ENCODE measurements at regions of chr6 and their contacts with region 1.

Region 1: GRCh38 chr6:30616811-30617564 is at the start of gene PPP1R10:
- DNase-seq: peak; percentile 100
- ATAC-seq: peak; percentile 78
- H3K4me3 Mint-ChIP-seq: peak within 1 kb of the TSS; percentile 93
- H3K27ac Mint-ChIP-seq: peak within 1 kb of the TSS; percentile 98
- H3K4me1 Mint-ChIP-seq: peaks cover 38% of the 10 kb centered on the region
- H3K27me3 Mint-ChIP-seq: peaks cover 2% of the 10 kb centered on the region
- total RNA-seq, gene PPP1R10: 92.8 to 99.7 TPM

Region 2: DNA sequence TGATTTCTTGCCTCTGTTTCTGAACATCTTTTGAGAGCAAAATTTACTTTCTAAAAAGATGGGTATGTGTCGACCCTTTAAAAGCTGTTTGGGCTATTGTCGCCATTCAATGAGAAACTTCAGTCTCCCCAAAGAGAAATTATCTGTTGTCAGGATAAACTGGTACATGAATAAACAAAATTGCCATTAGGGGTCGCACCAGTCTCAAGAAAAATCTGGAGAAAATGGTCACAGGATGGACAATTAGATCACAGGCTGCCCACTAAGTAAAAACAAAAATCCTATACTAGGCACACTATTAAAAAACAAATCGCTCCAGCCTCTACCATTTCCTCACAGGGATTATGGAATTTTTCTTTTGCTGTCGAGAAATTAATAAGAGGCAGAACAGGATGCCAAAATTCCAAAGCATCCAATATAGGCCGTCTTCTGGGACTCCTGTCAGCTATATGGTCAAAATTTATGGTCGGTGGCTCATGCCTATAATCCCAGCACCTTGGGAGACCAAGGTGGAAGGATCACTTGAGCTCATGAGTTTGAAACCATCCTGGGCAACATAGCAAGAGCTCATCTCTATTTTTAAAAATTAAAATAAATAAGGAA is 133.2 kb before region 1 on chr6:
- CTCF ChIA-PET with region 1: interaction called, 24 read pairs
- POLR2A ChIA-PET with region 1: no interaction called
- DNase-seq: peak; percentile 65
- ATAC-seq: no peak
- H3K4me3 Mint-ChIP-seq: no peak overlapping the region
- H3K27ac Mint-ChIP-seq: no peak overlapping the region
- H3K4me1 Mint-ChIP-seq: peaks cover 30% of the 10 kb centered on the region
- H3K27me3 Mint-ChIP-seq: peaks cover 40% of the 10 kb centered on the region

Region 3: GRCh38 chr6:30571075-30571768 is 45.8 kb before region 1 on chr6 and contains the start of gene ABCF1:
- CTCF ChIA-PET with region 1: interaction called, 4 read pairs
- POLR2A ChIA-PET with region 1: interaction called, 18 read pairs
- DNase-seq: peak; percentile 99
- ATAC-seq: peak; percentile 96
- H3K4me3 Mint-ChIP-seq: peak within 1 kb of the TSS; percentile 96
- H3K27ac Mint-ChIP-seq: peak within 1 kb of the TSS; percentile 98
- H3K4me1 Mint-ChIP-seq: peaks cover 54% of the 10 kb centered on the region
- H3K27me3 Mint-ChIP-seq: peaks cover 2% of the 10 kb centered on the region
- total RNA-seq, gene ABCF1: 72.2 to 79.6 TPM

Region 4: DNA sequence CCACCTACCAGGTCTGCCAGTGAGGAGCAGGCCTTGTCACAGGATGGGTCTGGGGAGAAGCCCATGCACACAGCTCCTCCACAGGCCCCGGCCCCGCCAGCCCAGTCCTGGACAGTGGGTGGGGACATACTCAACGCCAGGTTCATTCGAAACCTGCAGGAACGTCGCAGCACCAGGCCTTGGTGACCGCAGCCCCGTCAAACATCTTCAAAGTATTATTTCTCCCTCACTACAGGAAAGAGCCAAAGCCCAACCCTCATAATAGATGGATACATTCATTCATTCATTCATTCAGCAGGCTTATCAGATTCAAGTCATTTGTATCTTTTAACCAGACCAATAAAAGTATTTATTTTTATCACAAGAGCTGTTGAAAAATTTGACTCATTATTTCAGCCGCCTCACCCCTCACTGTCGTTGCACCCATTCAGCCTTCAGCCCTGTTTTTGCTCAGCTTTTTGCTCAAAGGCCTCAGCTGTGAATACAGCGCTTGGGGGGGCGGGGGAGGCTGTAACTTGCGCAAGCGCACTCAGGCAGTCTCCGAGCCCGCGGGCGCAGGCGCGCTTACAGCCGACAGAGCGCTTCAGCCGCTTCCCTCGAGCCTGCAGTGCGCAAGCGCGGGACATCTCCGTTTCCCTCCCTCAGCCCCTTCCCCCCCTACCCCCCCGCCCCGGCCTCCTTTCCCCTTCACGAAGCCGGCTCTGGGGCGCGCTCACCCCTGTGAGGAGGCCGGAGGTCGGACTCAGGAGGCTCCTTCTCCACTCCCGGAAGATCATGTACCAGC is 29.7 kb after region 1 on chr6 and contains the start of gene C6orf136:
- CTCF ChIA-PET with region 1: interaction called, 6 read pairs
- POLR2A ChIA-PET with region 1: interaction called, 13 read pairs
- DNase-seq: peak; percentile 96
- ATAC-seq: peak; percentile 80
- H3K4me3 Mint-ChIP-seq: peak within 1 kb of the TSS; percentile 91
- H3K27ac Mint-ChIP-seq: peak within 1 kb of the TSS; percentile 93
- H3K4me1 Mint-ChIP-seq: peaks cover 38% of the 10 kb centered on the region
- H3K27me3 Mint-ChIP-seq: no peaks in the 10 kb centered on the region
- total RNA-seq, gene C6orf136: 31.6 to 40.1 TPM

Region 5: DNA sequence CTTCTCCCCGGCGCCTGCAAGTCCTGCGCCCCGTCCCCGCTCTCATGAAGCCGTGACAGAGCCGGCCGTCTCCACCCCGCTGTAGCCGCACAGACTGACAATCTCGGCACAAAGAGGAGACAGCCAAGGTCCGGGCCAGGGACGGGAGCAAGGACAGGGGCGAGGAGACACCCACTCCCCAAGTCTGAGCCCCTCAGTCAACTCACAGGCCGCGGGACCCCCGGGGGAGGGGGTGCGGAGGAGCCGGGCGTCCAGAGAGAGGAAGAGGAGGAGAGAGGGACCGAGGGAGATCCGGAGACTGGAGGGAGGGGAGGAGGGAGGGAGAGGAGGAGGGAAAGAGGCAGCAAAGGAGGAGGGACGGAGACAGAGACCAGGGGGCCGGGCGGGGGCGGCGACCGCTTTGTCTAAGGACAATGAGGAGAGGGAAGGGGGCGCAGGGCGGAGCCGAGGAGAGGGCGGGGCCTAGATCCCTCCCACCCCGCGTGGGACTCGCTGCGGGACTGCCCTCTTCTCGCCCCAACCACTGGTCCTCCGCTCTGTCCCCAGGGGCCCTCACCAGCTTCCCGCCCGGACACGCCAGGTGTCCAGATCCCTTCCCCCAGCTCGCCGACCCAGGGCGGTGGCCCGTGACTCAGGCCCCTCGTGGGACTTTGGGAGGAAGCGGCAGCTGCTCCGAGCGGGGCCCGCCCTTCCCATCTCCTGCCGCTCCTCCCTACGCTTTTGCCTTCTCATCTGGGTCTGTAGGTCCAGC is 70.1 kb after region 1 on chr6:
- CTCF ChIA-PET with region 1: interaction called, 6 read pairs
- POLR2A ChIA-PET with region 1: interaction called, 20 read pairs
- DNase-seq: peak; percentile 91
- ATAC-seq: peak; percentile 43
- H3K4me3 Mint-ChIP-seq: peak overlapping the region; percentile 93
- H3K27ac Mint-ChIP-seq: peak overlapping the region; percentile 98
- H3K4me1 Mint-ChIP-seq: peaks cover 40% of the 10 kb centered on the region
- H3K27me3 Mint-ChIP-seq: no peaks in the 10 kb centered on the region

Region 6: GRCh38 chr6:30730601-30731435 is 113.8 kb after region 1 on chr6:
- CTCF ChIA-PET with region 1: interaction called, 17 read pairs
- POLR2A ChIA-PET with region 1: interaction called, 9 read pairs
- DNase-seq: peak; percentile 92
- ATAC-seq: peak; percentile 95
- H3K4me3 Mint-ChIP-seq: peak overlapping the region; percentile 44
- H3K27ac Mint-ChIP-seq: peak overlapping the region; percentile 70
- H3K4me1 Mint-ChIP-seq: peaks cover 61% of the 10 kb centered on the region
- H3K27me3 Mint-ChIP-seq: no peaks in the 10 kb centered on the region